ENCODE measurements at regions of chr12 and their contacts with region 1.

Region 1: GRCh38 chr12:92408072-92408900 is 262.6 kb upstream of the BTG1 start:
- DNase-seq: peak; percentile 17
- ATAC-seq: no peak
- H3K4me3 ChIP-seq: no peak overlapping the region
- H3K27ac ChIP-seq: no peak overlapping the region
- H3K4me1 ChIP-seq: no peaks in the 10 kb centered on the region
- H3K27me3 ChIP-seq: no peaks in the 10 kb centered on the region
- CTCF ChIP-seq: peak; percentile 59

Region 2: DNA sequence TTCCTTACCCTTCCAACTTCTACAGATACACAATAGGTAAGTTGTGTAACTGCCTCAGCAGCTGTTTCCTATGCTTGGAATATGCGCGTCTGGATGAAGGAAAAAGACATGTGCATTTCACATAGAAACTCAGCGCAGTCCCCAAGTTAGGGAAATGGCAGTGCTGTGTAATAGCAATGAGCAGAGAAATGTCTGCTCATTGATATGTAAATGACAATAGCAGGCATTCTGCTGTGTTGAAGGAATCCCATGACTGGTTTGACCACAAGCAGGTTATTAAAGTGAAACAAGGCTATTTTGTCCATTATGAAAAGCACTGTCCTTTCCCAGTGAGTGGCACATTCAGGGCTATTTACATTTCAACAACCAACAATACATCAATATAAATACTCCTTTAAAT is 369.2 kb before region 1 on chr12:
- CTCF ChIA-PET with region 1: no interaction called
- POLR2A ChIA-PET with region 1: interaction called, 11 read pairs
- in situ Hi-C with region 1: no loop called
- intact Hi-C with region 1: no loop called
- DNase-seq: no peak
- ATAC-seq: no peak
- H3K4me3 ChIP-seq: no peak overlapping the region
- H3K27ac ChIP-seq: no peak overlapping the region
- H3K4me1 ChIP-seq: peaks cover 6% of the 10 kb centered on the region; the same call in 1 of the 2 replicates
- H3K27me3 ChIP-seq: no peaks in the 10 kb centered on the region
- CTCF ChIP-seq: no peak

Region 3: DNA sequence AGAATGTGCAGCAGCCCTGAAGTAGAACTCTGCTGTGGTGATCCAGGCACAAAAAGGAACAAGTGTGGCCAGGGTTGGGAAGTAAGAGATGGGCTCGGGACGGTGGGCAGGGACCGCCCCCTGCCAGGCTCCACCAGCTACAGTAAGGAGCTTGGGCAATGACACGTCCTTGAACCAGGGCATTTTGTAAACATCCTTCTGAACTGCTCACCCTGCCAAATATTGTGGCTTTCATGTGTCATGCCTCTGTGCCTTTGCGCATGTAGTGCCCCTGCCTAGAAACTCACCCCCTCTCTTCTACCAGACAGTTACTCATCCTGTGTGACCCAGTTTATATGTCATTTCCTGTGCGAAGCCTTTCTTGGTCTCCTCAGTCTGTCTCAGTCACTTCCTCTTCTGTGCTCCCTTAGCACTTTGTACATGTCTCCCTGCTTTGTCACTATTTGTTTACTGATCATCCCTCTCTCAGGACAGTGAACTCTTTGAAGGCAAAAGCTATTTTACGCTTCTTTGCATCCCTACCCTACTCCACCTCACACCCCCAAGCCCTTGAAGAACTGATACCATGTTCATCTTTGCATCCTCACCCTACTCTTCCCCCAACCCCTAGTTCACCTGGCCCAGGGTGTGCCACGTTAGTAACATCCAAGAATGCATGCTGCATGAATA is 185.6 kb after region 1 on chr12:
- CTCF ChIA-PET with region 1: interaction called, 16 read pairs
- POLR2A ChIA-PET with region 1: no interaction called
- in situ Hi-C with region 1: no loop called
- intact Hi-C with region 1: no loop called
- DNase-seq: peak; percentile 61
- ATAC-seq: peak; percentile 81
- H3K4me3 ChIP-seq: no peak overlapping the region
- H3K27ac ChIP-seq: no peak overlapping the region
- H3K4me1 ChIP-seq: no peaks in the 10 kb centered on the region
- H3K27me3 ChIP-seq: no peaks in the 10 kb centered on the region
- CTCF ChIP-seq: no peak

Measured in Panc1 (cell line).